ENCODE measurements at regions of chr2 and their contacts with region 1.

Region 1: DNA sequence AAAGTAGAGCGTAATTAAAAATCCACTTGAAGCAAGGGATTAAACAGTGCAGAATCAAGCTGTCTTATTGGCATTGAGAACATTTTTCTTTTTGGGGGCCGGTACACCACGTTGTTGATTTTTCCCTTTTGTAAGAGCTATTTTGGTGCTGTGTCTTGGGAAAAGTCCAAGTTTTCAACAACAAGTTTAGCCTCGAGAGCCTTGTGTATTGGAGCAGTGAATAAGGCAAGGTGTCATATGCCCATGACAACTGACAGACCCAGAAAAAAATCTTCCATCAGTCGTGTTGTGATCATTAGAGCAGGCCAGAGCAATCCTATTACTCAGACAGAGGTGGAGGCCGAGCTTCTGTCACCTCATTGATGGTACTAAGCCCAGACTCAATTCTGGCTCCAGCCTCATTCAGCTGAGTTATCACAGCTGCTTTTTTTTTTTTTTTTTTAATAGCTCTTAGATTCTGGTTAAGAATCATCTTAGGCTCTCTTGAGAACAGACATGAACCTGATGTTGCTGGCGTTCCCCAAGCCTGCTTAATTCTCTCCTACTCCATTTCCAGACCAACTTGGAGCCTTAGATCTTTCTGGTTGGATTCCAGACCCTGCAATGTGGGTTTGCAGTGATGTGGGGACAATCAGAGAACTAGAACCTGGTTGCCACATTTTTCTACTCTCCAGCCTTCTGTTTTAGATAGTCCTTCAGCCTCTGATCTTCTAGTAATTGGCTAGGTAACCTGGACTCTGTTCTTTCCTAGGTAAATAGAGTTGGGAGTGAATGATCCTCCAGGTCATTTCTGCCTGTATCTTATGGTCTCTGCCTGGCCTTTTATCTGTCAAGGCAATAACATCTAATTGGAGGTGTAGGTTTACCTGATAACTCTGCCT is 43.1 kb downstream of the MOGAT1 start:
- DNase-seq: no peak
- H3K4me3 ChIP-seq: no peak overlapping the region
- H3K27ac ChIP-seq: peak overlapping the region in 52 of 59 donors; percentile 10 to 80 (median 56)
- H3K27me3 ChIP-seq: no peaks in the 10 kb centered on the region
- CTCF ChIP-seq: no peak

Region 2: GRCh38 chr2:222703866-222704265 is 10.7 kb before region 1 on chr2:
- intact Hi-C with region 1: no loop called
- DNase-seq: no peak
- H3K4me3 ChIP-seq: no peak overlapping the region
- H3K27ac ChIP-seq: peak overlapping the region in 18 of 59 donors; percentile 1 to 69 (median 25)
- H3K27me3 ChIP-seq: no peaks in the 10 kb centered on the region
- CTCF ChIP-seq: no peak

Region 3: DNA sequence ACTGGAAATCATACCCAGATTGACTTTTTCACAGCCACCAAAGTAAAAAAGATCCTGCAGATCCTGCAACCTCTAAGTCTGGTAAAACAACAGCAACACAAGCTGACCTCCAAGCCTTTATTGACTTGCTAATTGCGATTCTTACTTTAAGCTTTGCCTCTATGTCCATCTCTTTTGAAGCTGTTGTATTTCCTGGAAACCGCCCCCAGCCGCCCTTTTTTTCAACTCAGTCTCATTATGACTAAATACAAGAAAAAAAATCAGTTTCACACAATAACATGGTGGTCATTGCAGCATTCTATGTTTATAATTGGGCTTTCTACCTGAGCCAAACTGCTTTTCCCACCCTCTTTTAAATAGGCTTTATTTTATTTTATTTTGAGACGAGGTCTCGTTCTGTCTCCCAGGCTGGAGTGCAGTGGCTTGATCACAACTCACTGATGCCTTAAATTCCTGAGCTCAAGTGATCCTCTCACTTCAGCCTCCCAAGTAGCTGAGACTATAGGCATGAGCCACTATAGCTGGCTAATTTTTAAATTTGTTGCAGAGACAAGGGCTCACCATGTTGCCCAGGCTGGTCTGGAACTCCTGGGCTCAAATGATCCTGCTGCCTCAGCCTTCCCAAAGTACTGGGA is 33.0 kb after region 1 on chr2:
- intact Hi-C with region 1: loop called in 1 of 2 experiments (anchors 5 kb)
- DNase-seq: no peak
- H3K4me3 ChIP-seq: no peak overlapping the region
- H3K27ac ChIP-seq: peak overlapping the region in 8 of 59 donors; percentile 70 to 82 (median 78)
- H3K27me3 ChIP-seq: no peaks in the 10 kb centered on the region
- CTCF ChIP-seq: no peak

Region 4: GRCh38 chr2:222756951-222757650 is 42.5 kb after region 1 on chr2:
- intact Hi-C with region 1: loop called in 1 of 2 experiments (anchors 2 kb)
- DNase-seq: no peak
- H3K4me3 ChIP-seq: no peak overlapping the region
- H3K27ac ChIP-seq: no peak overlapping the region
- H3K27me3 ChIP-seq: no peaks in the 10 kb centered on the region
- CTCF ChIP-seq: no peak